Cardiac septum (tissue), 1 donor: ENCODE measurements at regions of chr3 and their contacts with region 1.

Region 1: GRCh38 chr3:98732286-98733052 is 30.7 kb upstream of the ST3GAL6 start:
- DNase-seq: peak; percentile 89

Region 2: DNA sequence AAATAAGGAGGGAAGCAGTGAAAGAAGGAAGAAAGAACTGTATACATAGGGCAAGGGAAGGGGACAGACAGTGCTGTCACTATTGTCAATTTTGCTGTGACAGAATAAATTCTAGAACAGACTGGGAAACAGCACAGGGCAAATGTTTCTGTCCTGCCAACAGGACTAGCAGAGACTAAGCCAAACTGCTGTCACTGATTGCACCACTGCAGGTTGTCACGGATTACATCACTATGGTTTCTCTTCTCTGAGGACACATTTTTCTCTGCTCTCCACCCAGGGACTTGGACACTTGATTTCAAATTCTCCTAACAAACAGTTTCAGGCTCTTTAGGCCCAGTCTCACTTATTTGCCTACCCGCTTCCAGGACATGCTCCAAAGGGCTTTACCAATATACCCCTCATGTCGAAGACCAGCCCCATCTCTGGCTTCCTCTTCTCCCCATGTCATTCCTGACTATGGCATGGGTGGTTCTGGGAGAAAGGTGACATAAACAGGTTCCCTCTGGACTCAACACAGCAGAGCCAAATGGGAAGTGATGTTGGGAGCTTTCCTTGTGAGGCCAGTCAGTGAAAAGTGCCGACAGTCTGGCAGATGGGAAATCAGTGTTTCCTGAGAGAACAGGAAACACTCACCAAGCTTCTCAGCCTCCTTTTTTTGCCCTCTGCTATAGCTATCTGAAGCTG is 39.5 kb before region 1 on chr3:
- intact Hi-C with region 1: loop called (anchors 5 kb)
- DNase-seq: no peak

Region 3: DNA sequence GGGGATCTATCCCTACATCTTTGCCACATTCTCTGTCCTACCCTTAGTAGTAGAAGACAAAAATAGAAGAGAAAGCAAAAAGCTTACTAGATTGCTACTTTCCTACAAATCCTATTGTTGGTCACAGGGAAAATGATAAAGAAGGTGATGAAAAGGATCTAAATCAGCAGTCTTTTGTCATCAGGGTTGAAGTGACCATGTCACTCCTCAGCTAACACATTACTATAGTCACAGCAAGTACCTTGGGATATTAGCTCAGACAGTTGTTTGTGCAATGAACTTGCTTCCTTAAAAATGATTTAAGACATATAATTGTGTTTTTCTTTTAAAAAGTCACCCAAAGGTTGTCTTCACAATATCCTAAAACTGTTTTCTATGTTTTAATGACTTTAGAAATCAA is 37.0 kb after region 1 on chr3:
- intact Hi-C with region 1: loop called (anchors 2 kb)
- DNase-seq: no peak

Region 4: GRCh38 chr3:98798820-98799219 is 66.4 kb after region 1 on chr3:
- intact Hi-C with region 1: loop called (anchors 5 kb)
- DNase-seq: no peak

Region 5: DNA sequence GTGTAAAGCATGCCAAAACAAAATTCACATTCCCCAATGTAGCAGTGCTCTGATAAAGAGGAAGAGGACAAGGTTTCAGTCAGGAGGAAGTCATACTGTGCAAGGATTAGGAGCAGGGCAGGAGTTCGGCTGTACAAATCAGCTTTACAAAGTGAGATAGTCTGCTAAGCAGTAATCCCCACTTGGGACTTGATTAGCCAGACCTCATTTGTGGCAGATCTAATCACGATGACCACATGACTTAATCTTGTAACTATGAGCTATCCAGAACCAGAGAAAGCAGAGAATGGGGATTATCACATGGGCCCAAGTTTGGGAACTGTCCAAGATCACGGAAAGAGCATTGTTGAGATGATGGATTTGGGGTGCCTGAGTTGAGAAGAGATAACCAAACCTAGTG is 161.3 kb after region 1 on chr3:
- intact Hi-C with region 1: loop called (anchors 10 kb)
- DNase-seq: no peak